Aorta (tissue), 5 donors: ENCODE measurements at regions of chr5 and their contacts with region 1.

Region 1: DNA sequence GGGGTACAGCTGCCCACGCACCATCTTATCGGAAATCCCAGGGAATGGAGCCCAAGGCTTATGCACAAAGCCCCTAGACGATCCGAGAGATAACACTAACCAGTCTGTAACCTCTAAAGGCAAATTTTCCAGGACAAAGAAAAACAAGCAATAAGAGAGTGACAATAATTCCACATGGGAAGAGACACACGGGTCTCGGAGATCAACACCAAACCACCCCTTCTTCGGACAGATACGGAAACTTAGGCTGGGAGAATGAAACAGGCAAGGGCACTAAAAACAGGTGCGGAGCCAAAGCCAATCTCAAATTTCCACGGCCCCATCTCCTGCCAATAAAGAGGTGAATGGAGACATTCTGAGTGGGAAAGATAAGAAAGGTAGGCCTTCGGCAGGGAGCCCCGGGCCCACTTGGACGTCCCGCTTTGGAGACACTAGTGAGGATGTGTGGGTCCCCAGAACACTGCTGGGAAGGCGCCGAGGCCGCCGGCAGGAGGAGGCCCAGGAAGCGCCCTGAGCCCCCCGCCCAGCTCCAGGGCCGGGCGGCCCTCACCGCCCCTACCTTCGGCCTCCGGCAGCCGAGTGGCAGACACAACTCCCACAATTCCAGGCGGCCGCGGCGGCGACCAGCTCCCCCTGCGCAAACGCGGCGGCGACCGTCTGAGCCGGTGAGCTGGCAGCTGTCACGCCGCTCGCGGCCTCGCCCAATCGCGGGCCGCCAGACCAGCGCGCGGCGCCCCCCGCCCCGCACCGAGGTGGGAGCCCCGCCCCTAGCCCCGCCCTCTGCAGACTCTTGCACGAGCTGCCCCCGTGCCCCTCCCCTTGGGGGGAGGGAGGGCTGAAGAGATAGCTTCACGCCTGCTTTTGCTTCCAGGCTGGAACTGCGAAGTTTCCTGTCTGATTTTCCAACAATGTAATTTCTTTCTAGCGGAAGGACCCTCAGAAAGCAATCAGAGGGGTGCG is at the start of gene SIL1:
- DNase-seq: peak; percentile 98 to 99
- ATAC-seq: peak; percentile 97
- H3K4me3 ChIP-seq: peak within 1 kb of the TSS; percentile 60 to 71
- H3K27ac ChIP-seq: peak within 1 kb of the TSS in 1 of 2 donors; percentile 54
- H3K4me1 ChIP-seq: no peaks in the 10 kb centered on the region
- H3K27me3 ChIP-seq: no peaks in the 10 kb centered on the region
- total RNA-seq, gene SIL1: 48.7 to 49.8 TPM

Region 2: DNA sequence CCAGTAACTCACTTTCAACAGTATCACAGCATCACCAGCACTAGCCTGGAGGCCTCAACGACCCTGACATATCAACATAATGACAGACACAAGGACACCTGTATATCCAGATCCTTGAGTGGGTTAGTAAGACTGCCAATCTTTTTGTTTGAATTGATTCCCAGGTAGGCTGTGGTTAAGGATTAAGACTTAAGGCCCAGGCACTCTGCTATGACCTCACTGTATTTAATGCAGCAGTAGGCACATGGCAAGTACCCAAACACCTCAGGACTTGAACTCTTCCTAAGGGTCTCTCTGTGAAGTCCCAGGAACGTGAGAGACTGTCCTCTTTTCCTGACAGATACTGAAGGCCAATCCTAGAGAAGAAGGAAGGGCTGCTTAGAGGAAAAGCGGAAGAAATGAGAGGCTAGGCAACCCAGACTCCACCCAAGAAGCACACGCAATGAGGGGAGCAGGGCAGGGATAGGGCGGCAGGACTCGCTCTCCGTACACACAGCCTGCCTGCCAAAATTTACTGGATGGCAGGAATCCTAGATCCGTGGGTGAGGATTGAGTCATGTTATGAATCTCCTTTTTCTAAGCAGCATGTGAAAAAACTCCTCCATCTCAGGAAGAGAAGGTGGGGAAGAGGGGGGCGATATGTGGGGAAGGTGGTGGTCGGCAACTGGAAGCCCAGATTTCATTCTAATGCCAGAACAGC is 93.3 kb before region 1 on chr5:
- intact Hi-C with region 1: loop called in 1 of 2 experiments (anchors 5 kb)
- DNase-seq: peak; percentile 87 to 88
- ATAC-seq: peak; percentile 94
- H3K4me3 ChIP-seq: no peak overlapping the region
- H3K27ac ChIP-seq: peak overlapping the region; percentile 95 to 98
- H3K4me1 ChIP-seq: peaks cover 3 to 18% of the 10 kb centered on the region in 2 donors
- H3K27me3 ChIP-seq: no peaks in the 10 kb centered on the region

Region 3: DNA sequence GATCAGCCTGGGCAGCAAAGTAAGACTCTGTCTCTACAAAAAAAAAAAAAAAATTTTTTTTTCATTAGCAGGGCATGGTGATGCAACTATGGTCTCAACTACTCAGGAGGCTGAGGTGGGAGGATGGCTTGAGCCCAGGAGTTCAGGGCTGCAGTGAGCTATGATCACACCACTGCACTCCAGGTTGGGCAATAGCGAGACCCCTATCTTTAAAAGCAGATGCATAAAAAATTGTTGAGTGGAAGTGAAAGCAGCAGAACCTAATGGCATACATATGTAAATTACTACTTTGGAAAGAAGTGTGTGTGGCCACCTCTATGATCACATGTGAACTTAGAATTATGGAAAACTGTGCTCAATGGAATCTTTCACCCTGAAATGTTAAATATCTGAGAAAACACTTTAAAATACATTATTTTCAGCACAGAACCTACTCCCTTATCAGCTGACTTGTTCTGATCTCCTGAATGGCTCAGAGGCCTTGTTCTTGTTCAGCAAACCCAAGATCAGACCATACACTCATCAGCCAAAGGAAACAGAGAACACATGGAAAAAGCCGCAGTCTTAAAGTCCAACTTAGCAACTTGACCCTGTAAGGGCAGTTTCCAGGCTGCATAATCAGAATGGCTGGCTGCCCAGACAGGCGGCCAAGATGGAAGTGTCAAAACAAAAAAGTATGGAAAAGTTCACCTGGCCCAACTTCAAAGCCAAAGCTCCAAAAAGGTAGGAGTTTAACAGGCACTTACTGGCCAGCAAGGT is 56.4 kb before region 1 on chr5:
- intact Hi-C with region 1: loop called (anchors 5 to 10 kb)
- DNase-seq: peak; percentile 65 to 81
- ATAC-seq: peak; percentile 85
- H3K4me3 ChIP-seq: no peak overlapping the region
- H3K27ac ChIP-seq: peak overlapping the region; percentile 67 to 96
- H3K4me1 ChIP-seq: peaks cover 3 to 6% of the 10 kb centered on the region in 2 donors
- H3K27me3 ChIP-seq: no peaks in the 10 kb centered on the region

Region 4: DNA sequence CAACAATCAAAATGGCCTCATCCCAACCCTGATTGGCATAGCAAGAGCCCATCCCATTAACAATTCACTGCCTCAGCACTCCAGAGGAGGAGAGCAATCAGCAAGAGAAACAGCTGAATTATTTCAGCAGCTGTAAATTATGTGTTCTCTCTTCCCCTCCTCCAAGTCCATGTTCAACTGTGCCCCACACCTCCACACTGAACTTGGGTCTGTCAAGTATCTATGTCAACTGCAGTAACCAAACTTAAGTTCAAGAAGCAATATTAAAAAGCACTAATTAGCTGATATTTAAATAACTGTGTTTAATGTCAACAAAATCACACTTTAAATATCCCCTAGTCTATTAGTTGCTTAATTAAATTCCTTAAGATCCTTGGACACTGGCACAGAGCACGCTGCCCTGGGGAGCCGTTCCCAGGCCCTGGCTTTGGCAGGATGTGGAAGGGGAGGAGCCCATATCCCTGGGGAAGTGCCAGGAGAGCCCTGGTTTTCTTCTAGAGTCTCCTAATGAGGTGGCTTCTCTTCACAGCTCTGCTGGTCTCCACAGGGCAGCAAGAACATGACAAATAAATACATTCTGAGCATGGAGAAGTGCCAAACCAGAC is 50.4 kb before region 1 on chr5:
- intact Hi-C with region 1: loop called (anchors 5 to 10 kb)
- DNase-seq: peak; percentile 82 to 88
- ATAC-seq: peak; percentile 82
- H3K4me3 ChIP-seq: no peak overlapping the region
- H3K27ac ChIP-seq: peak overlapping the region in 1 of 2 donors; percentile 52
- H3K4me1 ChIP-seq: no peaks in the 10 kb centered on the region
- H3K27me3 ChIP-seq: no peaks in the 10 kb centered on the region